Right ventricle myocardium inferior (tissue), 1 donor: ENCODE measurements at regions of chr5 and their contacts with region 1.

Region 1: DNA sequence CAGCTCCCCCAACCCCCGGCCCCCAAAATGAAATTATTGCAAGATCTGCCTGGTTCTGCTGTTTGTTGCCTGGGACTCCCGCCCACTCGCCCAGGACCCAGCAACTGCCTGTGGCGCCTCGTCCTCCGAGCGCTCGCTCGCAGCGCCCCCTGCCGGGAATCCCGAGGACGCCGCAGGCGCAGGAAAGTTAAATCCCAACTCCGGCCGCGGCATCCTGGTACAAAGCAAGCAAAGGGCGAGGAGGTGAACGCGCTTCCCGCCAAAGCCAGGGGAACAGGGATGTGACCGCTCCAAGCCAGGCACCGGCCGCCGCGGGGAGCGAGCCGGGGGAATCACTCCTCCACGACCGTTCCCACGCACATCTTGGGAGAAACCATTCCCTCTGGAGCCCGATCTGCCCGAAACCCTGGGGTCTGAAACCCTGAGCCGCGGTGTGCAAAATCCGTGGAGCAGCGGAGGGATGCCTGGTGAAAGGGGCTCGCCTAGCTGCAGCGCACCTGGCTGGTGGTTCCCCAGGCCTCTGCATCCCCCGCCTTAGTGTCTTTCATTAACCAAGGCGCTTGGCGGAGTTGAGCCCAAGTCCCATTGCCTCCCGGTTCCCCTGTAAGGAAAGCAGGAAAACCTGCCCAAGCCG is 1.3 kb downstream of the SEMA5A start:
- DNase-seq: peak; percentile 89
- ATAC-seq: peak; percentile 80

Region 2: DNA sequence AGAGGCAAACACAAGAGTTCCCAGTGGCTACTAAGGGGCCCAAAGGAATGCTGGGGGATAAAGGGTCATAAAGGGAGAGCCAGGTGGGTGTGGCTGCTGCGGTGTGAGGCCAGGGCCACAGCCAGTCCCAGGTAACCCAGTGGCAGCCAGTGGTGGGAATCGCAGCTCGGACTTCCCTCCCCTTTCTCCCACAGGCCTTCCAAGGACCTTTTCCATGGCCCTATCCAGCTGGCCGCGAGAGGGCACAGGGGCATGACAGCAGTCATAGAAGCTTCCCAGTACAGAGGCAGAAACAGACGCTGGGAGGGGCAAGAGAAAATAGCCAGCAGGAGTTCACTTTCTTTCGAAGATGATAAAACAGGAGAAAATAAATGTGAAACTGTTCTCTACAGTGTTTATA is 256.4 kb before region 1 on chr5:
- intact Hi-C with region 1: loop called (anchors 2 kb)
- DNase-seq: peak; percentile 65
- ATAC-seq: peak; percentile 81

Region 3: DNA sequence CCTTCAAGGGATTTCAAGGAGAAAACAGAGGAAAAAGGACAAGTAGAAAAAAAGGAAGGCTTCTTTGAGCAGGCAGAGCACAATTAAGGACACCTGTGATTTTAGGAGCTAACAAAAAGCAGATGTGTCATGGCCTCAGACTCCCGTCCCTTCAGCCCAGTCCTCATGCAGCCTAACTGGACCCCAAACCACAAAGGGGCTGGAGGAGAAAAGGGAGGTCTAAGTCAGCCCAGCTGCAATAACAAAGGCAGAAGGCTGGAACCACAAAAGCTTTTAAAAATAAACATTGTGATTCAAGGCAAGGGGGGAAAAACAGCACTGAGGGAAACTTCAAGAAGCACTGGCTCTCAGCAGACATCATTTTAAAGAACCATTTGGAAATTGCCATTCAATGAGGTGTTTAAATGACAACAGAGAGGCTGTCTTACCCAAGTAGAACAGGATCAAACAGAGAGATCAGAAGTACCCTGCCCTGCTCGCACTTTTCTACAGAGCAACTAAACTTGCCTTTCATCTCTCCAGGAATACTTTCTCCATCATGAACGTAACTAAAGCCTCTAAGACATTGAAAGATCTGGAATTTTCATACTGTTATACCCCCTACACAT is 88.1 kb before region 1 on chr5:
- intact Hi-C with region 1: loop called (anchors 10 kb)
- DNase-seq: no peak
- ATAC-seq: no peak

Region 4: DNA sequence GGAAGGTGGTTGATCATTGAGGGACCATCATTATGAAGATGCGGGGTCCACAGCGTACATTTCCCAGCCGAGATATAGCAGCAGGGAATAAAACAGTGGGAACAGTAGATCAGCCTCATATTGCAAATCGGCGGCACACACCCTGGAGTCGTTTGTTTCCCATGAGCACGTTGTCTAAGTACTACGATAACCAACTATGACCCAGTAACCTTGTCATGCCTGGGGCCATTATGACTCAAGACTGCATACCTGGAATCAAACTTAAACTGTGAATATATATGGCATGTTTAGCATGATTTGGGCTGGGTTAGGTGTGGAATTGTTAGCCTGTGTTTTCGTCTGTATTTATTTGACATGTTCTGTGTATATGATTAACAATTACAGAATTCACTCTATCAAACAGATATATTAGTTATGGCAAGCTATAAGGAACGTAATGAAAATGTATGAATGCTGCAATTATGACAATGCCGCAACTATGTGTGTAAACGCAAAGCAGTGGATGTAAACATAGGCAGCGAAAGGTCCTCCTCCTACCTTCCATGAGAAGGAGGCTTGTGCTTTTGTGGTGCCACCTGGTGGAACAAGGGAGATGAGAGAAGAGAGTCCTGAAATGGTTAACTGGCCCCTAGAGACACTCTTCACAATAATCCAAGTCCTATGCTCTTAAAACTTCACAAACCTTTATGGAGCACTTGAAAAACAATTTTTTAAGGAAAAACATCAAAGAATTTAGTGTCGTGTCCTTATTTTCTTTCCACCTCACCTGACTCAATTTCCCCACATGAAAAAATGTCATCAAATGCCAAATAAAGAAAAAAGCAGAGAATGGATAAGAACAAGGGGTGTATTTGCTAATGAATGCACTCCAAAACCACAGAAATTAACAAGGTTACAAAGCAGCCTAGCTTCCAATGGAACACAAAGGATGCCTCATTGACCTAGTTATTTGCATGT is 45.8 kb before region 1 on chr5:
- intact Hi-C with region 1: no loop called
- DNase-seq: no peak
- ATAC-seq: no peak

Region 5: DNA sequence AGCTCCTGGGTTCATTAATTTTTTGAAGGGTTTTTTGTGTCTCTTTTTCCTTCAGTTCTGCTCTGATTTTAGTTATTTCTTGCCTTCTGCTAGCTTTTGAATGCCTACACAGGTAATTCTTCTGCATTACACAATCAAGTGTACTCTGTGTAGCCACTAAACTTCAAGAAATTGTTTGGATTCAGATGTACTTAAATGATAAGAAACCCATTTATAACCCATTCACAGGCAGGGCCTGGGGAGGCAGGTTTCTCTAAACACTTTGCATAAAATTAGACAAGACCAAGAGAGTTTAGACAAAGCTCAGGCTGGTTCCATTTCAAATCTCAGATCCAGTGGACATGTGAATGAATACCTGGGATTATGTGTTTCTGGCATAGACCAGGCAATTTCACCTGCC is 42.5 kb after region 1 on chr5:
- intact Hi-C with region 1: no loop called
- DNase-seq: no peak
- ATAC-seq: no peak

Region 6: DNA sequence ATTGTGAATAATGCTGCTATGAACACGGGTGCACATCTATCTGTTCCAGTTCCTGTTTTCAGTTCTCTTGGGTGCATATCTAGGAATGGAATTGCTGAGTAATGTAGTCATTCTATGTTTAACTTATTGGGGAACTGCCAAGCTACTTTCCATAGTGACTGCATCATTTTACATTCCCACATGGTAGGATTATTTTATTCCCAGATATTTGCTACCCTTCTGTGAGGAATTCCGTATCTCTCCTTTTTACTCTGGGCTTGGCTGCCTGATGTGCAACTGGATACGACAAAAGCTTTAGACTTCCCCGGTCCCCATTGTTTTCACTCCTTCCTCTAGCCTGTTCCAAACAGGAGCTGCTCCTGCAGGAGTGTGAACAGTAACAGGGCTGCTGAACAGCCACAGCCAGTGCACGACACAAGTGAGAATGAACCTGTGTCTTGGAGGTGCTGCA is 78.4 kb after region 1 on chr5:
- intact Hi-C with region 1: loop called (anchors 2 kb)
- DNase-seq: no peak
- ATAC-seq: no peak